ENCODE measurements at regions of chr18 and their contacts with region 1.

Region 1: GRCh38 chr18:75209129-75209950 is at the start of gene PTGR3:
- DNase-seq: peak; percentile 94
- H3K4me3 Mint-ChIP-seq: peak within 1 kb of the TSS; percentile 97
- H3K27ac Mint-ChIP-seq: peak within 1 kb of the TSS; percentile 96
- H3K4me1 Mint-ChIP-seq: peaks cover 50% of the 10 kb centered on the region
- H3K27me3 Mint-ChIP-seq: peaks cover 24% of the 10 kb centered on the region
- total RNA-seq, gene PTGR3: 23.3 and 23.6 TPM in 2 replicates

Region 2: GRCh38 chr18:74147779-74148542 is 1061.4 kb before region 1 on chr18 and contains the starts of genes FBXO15 and TIMM21:
- intact Hi-C with region 1: loop called (anchors 10 kb)
- DNase-seq: peak; percentile 99
- H3K4me3 Mint-ChIP-seq: peak within 1 kb of the TSS; percentile 98
- H3K27ac Mint-ChIP-seq: peak within 1 kb of the TSS; percentile 97
- H3K4me1 Mint-ChIP-seq: peaks cover 50% of the 10 kb centered on the region
- H3K27me3 Mint-ChIP-seq: peaks cover 5% of the 10 kb centered on the region
- total RNA-seq, gene FBXO15: 1.2 and 1.3 TPM in 2 replicates
- total RNA-seq, gene TIMM21: 61.8 and 71.8 TPM in 2 replicates

Region 3: DNA sequence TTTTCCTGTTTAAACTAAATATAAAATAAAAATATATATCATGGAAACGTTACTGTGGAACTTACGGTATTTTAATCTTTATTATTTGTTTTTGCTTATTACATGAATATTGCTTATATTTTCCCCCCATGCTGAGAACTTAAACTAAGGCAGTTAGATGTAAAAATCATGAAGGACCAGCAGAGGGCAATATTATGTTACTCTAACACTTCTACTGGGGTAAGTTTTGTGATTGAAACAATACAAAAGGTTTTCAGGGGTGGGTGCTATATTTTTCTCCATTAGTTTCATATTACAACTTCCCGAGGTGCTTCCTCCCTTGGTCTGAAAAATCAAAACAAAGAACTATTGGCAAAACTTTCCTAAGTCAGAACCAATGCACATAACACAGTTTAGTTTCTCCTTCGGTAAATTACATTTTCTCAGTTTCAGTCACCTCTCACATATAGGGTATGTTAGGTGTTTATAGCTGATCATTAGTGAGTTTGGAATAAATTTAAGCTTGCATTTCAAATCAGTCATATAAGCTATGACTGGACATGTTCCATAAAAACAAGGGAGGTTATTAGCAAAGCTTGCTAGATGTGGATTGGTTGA is 556.9 kb before region 1 on chr18:
- intact Hi-C with region 1: loop called (anchors 5 kb)
- DNase-seq: no peak
- H3K4me3 Mint-ChIP-seq: no peak overlapping the region
- H3K27ac Mint-ChIP-seq: no peak overlapping the region
- H3K4me1 Mint-ChIP-seq: no peaks in the 10 kb centered on the region
- H3K27me3 Mint-ChIP-seq: no peaks in the 10 kb centered on the region

Region 4: GRCh38 chr18:75060185-75060584 is 149.2 kb before region 1 on chr18:
- intact Hi-C with region 1: no loop called
- DNase-seq: no peak
- H3K4me3 Mint-ChIP-seq: no peak overlapping the region
- H3K27ac Mint-ChIP-seq: no peak overlapping the region
- H3K4me1 Mint-ChIP-seq: no peaks in the 10 kb centered on the region
- H3K27me3 Mint-ChIP-seq: no peaks in the 10 kb centered on the region

Region 5: GRCh38 chr18:75070625-75071483 is 138.5 kb before region 1 on chr18:
- intact Hi-C with region 1: loop called (anchors 1 kb)
- DNase-seq: peak; percentile 91
- H3K4me3 Mint-ChIP-seq: peak overlapping the region; percentile 79
- H3K27ac Mint-ChIP-seq: peak overlapping the region; percentile 92
- H3K4me1 Mint-ChIP-seq: peaks cover 29% of the 10 kb centered on the region
- H3K27me3 Mint-ChIP-seq: no peaks in the 10 kb centered on the region

Region 6: DNA sequence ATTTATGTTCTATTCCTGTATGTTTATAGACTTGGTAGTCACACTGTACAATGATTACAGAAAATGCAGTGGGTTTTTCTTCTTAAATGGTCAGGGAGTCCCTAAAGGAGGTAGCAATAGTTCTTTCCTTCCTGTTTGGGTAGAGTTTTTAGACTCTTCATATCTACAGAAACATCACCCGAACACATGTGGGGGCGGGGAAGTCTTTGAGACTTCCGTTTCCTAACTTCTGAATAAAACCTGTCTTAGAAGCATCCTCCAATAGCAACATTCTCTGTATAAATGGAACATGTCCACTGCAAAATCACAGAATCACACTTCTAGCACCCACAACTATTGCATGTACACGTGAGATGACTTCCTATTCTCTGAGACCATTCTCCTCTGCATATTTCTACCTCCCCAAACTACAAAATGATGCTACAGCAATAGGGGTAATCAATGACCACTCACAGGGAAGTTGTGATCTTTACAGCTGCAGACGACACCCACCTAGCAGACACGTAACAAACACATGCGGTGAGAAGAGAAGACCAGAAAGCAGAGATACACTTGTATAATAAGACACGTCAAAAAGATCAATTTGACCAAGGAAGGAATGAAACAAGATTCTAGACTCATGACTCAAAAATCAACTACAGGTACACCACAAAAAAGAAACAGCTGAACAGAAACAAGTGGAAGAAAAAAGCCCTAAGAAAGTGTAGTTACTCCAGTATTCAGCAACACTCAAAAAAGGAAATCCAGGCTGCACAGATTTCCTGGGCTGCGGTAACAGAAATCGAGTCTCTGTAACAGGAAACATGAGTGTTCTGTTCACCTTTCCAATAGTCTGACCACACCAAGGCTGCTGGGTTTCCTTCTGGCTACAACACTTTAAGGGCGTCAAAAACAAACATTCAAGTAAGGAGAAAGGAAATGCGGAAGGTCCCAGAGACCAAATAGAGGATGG is 1165.3 kb after region 1 on chr18:
- intact Hi-C with region 1: loop called (anchors 10 kb)
- DNase-seq: peak; percentile 83
- H3K4me3 Mint-ChIP-seq: peak overlapping the region; percentile 44
- H3K27ac Mint-ChIP-seq: peak overlapping the region; percentile 74
- H3K4me1 Mint-ChIP-seq: peaks cover 38% of the 10 kb centered on the region
- H3K27me3 Mint-ChIP-seq: peaks cover 9% of the 10 kb centered on the region

Measured in activated CD4-positive, alpha-beta T cell treated with anti-CD3 and anti-CD28 coated beads, Interleukin-2, amount 10 ng/mL, durations not matched to agents 24 days and 14 days (primary cell).